Activated naive CD4-positive, alpha-beta T cell treated with anti-CD3 and anti-CD28 coated beads for 36 hours (primary cell): ENCODE measurements at regions of chr13 and their contacts with region 1.

Region 1: DNA sequence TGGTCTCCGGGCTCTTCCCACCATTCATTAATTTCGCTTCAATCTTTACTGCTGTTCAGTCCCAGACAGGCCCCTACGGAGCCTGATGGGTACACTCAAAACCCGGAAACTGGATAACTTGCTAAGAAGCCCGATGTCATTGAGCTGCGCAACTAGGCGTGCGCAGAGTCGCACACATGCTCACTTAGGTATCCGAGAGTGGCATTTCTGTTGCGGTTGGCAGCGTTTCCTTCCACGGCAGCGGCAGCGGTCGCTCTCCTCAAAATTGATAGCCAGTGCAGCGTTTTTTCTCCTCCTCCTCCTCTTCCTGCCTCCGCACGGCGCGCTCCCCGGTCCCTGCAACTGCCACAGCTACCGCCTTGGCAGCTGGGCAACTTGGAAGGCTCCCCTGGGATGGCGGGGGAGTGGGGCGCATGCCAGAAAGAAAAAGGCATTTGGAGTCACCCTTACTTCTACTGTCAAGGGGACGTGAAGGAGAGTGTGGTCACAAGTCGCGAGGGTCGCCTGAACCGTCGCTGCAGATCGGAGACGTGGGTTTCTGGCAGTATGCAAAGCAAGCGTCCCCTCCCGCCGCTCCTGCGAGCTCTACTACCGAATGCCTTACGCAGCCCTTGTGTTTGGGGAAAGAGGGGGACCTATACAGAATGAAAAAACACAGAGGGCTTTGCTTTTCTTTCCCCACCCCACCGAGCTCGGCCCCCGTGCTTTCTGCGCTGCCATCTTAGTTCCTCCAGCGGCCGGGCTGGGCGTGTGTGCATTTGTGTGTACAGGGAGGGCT is 2.4 kb upstream of the MYCBP2 start:
- DNase-seq: peak; percentile 96
- H3K4me3 Mint-ChIP-seq: peak overlapping the region; percentile 92
- H3K27ac Mint-ChIP-seq: peak overlapping the region; percentile 98
- H3K4me1 Mint-ChIP-seq: peaks cover 38% of the 10 kb centered on the region
- H3K27me3 Mint-ChIP-seq: no peaks in the 10 kb centered on the region

Region 2: DNA sequence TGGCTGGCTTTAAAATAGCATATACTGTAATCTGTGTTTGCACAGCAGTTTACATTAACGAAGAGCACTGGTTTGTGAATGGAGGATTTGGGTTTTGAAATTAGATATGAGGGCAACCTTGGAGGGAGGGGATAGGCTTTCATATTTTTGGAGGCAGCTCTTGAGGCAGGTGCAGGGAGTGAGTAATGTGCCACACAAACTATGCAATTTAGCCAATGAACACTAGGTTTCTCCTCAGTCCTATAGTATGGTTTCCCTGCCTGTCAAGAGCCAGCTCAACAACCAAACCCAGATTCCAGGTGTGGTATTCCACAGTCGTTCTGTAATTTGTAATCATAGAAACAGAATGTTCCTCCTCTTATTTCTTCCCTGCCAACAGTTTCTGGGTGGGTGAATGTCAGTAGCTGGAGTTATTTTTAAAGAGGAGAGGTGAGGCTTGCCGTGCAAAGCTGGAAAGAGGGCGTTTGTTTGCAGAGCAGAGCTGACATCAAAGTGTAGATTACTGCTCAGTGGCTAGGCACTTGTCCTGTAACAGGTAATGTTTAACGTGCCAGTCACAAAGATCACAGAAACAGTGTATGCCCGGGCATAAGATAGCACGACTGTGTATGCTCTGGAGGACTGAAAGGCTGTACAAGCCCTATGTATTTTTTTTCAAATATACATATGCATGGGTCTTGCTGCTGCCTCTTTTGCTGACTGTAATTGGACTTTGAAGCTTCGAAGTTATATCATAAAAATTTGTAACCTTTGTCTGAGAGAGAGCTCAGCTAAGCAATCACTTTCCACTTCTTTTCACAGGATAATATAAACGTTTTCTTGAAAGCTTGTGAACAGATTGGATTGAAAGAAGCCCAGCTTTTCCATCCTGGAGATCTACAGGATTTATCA is 1568.9 kb before region 1 on chr13:
- CTCF ChIA-PET with region 1: no interaction called
- intact Hi-C with region 1: loop called (anchors 5 kb)
- DNase-seq: peak; percentile 31
- H3K4me3 Mint-ChIP-seq: peak overlapping the region; percentile 67
- H3K27ac Mint-ChIP-seq: peak overlapping the region; percentile 11
- H3K4me1 Mint-ChIP-seq: peaks cover 72% of the 10 kb centered on the region
- H3K27me3 Mint-ChIP-seq: peaks cover 4% of the 10 kb centered on the region

Region 3: DNA sequence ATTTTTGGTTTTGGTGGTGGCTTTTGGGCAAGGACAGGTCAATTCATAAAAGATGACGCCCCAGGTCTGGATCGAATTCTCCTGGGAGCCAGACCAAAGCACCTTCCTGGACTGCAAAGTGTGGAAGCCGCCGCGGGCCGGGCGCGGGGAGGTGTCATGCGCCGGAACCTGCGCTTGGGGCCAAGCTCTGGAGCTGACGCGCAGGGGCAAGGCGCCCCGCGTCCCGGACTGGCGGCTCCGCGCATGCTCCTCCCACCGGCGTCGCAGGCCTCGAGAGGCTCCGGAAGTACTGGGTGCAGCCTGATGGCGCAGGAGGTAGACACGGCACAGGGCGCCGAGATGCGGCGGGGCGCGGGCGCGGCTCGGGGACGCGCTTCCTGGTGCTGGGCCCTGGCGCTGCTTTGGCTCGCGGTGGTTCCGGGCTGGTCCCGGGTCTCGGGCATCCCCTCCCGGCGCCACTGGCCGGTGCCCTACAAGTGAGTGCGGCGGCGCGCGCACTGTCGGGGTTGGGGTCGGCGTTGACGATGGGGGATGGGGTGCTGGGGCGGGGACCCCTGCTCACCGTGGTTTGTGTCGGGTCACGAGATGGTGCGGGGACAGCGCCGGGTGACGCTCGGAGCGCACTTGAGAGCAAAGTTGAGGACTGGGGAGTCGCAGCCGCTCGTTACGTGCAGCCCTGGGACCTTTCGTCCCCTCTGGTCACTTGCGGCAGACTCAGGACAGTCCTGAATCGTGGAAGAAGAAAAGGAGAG is 337.4 kb before region 1 on chr13 and contains the start of gene CLN5:
- CTCF ChIA-PET with region 1: no interaction called
- intact Hi-C with region 1: loop called (anchors 1 kb)
- DNase-seq: peak; percentile 95
- H3K4me3 Mint-ChIP-seq: peak within 1 kb of the TSS; percentile 95
- H3K27ac Mint-ChIP-seq: peak within 1 kb of the TSS; percentile 97
- H3K4me1 Mint-ChIP-seq: peaks cover 39% of the 10 kb centered on the region
- H3K27me3 Mint-ChIP-seq: no peaks in the 10 kb centered on the region
- total RNA-seq, gene CLN5: 13.6 to 14.6 TPM

Region 4: GRCh38 chr13:77184455-77184854 is 144.9 kb before region 1 on chr13:
- CTCF ChIA-PET with region 1: no interaction called
- intact Hi-C with region 1: loop called (anchors 1 kb)
- DNase-seq: peak; percentile 76
- H3K4me3 Mint-ChIP-seq: no peak overlapping the region
- H3K27ac Mint-ChIP-seq: peak overlapping the region; percentile 20
- H3K4me1 Mint-ChIP-seq: peaks cover 16% of the 10 kb centered on the region
- H3K27me3 Mint-ChIP-seq: no peaks in the 10 kb centered on the region

Region 5: DNA sequence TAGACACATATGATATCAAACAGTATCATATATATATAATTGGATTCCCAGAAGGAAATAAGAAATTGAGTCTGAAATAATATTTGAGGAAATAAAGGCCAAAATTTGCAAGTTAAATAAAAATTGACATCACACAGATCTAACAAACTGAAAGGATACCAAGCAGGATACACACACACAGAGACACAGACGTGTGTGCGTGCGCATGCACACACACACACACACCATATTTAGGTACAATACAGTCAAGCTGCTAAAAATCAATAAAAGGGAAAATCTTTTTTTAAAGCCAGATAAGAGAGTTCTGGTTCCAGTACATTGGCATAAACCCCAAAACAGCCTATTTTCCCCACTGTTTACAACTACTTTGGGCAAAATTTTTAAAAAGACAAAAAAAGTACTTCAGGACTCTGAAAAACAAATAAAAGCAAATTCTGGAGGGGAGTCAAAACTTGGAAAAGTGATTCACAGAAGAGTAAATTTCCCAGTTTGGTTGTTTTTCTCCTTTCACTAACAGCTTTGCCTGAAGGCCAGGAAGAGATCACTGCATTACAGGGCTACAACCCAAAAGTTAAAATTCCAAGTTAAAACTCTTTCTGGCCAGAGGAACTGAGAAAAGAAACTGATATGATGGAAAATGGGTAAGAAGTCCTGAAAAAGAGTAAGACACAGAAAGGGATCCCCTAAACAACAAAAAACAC is 18.6 kb before region 1 on chr13:
- CTCF ChIA-PET with region 1: interaction called, 4 read pairs
- intact Hi-C with region 1: loop called (anchors 1 kb)
- DNase-seq: no peak
- H3K4me3 Mint-ChIP-seq: no peak overlapping the region
- H3K27ac Mint-ChIP-seq: peak overlapping the region; percentile 21
- H3K4me1 Mint-ChIP-seq: peaks cover 85% of the 10 kb centered on the region
- H3K27me3 Mint-ChIP-seq: no peaks in the 10 kb centered on the region

Region 6: DNA sequence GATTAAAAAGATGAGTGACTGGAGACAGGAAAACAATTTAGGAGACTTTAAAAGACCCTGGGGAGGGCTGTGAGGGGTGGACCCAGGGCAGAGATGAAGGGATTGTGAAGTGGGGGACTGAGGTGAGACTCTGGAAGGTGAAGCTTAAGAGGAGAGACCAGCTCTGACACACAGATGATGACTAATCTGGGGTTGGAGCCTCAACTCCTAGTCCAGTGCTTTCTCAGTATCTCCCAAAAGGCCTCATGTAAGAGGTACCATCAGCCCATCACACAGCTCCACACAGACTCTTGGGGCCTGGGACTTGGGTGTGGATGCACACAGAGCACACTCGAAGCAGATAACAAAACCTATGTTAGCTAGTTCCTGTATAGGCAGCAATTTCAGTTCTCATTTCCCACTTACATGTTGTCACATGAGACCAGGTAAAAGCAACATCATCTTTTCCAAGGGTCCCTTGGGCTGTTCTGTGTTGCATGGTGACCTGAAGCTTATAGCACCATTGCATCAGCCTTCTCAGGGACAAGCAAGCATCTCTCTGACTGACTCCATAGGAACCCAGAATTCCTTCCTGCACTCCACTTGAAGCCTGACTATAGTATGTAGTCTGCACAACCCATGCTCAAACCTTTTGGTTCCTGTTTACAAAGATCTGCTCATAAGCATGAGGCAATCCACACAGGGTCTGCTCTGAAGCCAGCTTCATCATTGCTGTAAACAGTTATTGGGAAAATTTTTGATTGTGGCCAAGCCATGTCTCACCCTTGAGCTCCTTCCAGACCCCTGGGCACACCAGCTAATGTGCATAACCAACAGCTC is 86.1 kb after region 1 on chr13:
- CTCF ChIA-PET with region 1: no interaction called
- intact Hi-C with region 1: no loop called
- DNase-seq: no peak
- H3K4me3 Mint-ChIP-seq: no peak overlapping the region
- H3K27ac Mint-ChIP-seq: no peak overlapping the region
- H3K4me1 Mint-ChIP-seq: peaks cover 7% of the 10 kb centered on the region
- H3K27me3 Mint-ChIP-seq: no peaks in the 10 kb centered on the region

Region 7: GRCh38 chr13:77480066-77480465 is 150.7 kb after region 1 on chr13:
- CTCF ChIA-PET with region 1: interaction called, 12 read pairs
- intact Hi-C with region 1: loop called (anchors 1 kb)
- DNase-seq: no peak
- H3K4me3 Mint-ChIP-seq: no peak overlapping the region
- H3K27ac Mint-ChIP-seq: no peak overlapping the region
- H3K4me1 Mint-ChIP-seq: peaks cover 16% of the 10 kb centered on the region
- H3K27me3 Mint-ChIP-seq: no peaks in the 10 kb centered on the region

Region 8: DNA sequence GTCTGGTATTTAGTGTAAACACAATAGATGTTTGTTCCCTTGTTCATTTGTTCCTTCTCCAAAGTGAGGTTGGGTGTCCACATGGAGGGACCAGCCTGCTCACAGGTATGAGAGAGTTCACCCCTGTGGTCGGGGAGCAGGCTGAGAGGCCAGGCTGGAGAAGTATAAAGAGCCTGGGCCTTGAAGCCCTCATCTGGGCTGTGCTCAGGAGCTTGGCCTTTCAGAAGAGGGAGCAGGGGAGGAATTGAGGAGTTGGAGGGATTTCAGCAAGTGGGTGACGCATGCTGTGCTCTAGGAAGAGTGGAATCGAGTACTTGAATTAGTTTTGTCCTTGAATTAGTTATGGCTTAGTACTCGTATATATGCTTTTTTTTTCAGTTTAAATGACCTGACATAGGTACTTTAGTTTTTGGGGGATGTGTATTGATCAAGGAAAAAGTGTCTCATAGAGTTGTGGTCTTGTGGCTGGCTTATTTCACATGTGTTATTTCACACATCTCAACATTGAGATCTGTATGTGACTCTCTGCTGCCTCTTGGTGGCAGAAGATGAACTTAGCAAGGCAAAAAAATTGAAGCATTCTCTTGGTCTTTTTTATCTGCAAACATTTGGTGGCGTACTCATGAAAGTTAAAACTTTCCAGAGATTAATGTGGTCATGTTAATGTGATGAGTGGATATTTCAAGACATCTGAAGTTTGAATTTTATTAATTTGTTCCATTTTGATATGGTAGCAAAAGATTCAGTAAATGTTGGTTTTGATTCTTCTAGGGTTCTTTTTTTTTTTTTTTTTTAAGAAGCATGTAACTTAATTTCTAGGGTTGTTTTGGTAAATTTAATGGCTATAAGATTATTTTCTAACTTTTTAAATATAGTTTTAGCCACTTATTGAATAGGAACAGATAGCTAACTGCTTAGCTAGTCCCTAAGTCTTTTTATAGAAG is 422.5 kb after region 1 on chr13:
- CTCF ChIA-PET with region 1: interaction called, 3 read pairs
- intact Hi-C with region 1: loop called (anchors 5 kb)
- DNase-seq: peak; percentile 73
- H3K4me3 Mint-ChIP-seq: no peak overlapping the region
- H3K27ac Mint-ChIP-seq: no peak overlapping the region
- H3K4me1 Mint-ChIP-seq: peaks cover 18% of the 10 kb centered on the region
- H3K27me3 Mint-ChIP-seq: no peaks in the 10 kb centered on the region